Activated CD4-positive, alpha-beta T cell treated with anti-CD3 and anti-CD28 coated beads for 36 hours (primary cell): ENCODE measurements at regions of chr4 and their contacts with region 1.

Region 1: GRCh38 chr4:71307729-71308128 is 31.1 kb upstream of the SLC4A4 start:
- DNase-seq: no peak
- ATAC-seq: no peak
- H3K4me3 Mint-ChIP-seq: no peak overlapping the region
- H3K27ac Mint-ChIP-seq: no peak overlapping the region
- H3K4me1 Mint-ChIP-seq: no peaks in the 10 kb centered on the region
- H3K27me3 Mint-ChIP-seq: peaks cover 6% of the 10 kb centered on the region

Region 2: GRCh38 chr4:71343670-71344466 is 36.1 kb after region 1 on chr4:
- CTCF ChIA-PET with region 1: no interaction called
- POLR2A ChIA-PET with region 1: no interaction called
- intact Hi-C with region 1: no loop called
- DNase-seq: no peak
- ATAC-seq: no peak
- H3K4me3 Mint-ChIP-seq: no peak overlapping the region
- H3K27ac Mint-ChIP-seq: no peak overlapping the region
- H3K4me1 Mint-ChIP-seq: peaks cover 2% of the 10 kb centered on the region
- H3K27me3 Mint-ChIP-seq: peaks cover 3% of the 10 kb centered on the region

Region 3: DNA sequence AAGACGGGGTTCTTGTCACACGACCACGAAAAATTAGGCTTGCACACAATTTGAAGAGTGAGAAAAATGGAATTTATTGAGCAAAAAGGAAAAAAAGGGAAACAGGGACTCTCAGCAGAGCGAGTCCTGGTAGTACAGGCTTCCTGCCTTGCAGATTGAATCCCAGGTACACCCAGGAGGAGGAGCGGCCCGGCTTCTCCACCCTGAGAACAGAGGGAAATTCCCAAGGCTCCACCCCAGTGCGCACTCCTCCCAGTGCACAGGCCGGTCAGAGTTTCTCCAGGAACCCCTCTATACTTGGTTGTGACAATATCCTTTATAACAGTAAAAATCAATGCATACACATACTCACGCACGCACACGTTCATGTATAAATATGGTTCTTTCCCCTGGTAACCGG is 53.1 kb after region 1 on chr4:
- CTCF ChIA-PET with region 1: no interaction called
- POLR2A ChIA-PET with region 1: no interaction called
- intact Hi-C with region 1: loop called in 1 of 2 experiments (anchors 5 kb)
- DNase-seq: no peak
- ATAC-seq: no peak
- H3K4me3 Mint-ChIP-seq: no peak overlapping the region
- H3K27ac Mint-ChIP-seq: no peak overlapping the region
- H3K4me1 Mint-ChIP-seq: no peaks in the 10 kb centered on the region
- H3K27me3 Mint-ChIP-seq: no peaks in the 10 kb centered on the region